Posterior vena cava (tissue), 2 donors: ENCODE measurements at regions of chr3 and their contacts with region 1.

Region 1: DNA sequence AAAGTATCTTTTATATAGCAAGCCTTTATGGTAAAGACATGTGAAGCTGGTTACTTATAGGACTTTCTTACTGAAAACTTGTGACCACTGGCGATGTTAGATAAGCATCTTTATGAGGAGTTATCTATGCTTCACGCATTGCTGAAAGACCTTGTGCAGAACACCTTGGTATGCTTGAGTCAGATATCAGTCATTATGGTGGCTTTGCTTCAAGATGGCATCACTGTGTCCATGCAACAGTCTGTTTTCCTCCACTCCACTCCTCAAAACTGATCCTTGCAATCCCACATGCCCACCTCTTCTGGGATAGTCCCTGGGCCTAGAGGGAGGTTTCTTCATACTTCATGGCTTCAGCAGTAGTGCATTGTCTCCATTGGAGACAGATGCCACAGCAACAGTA is 656.3 kb downstream of the ZNF385D start:
- DNase-seq: no peak

Region 2: GRCh38 chr3:20878691-20879090 is 216.0 kb before region 1 on chr3:
- intact Hi-C with region 1: no loop called
- DNase-seq: no peak

Region 3: GRCh38 chr3:21073561-21073960 is 21.1 kb before region 1 on chr3:
- intact Hi-C with region 1: no loop called
- DNase-seq: no peak

Region 4: DNA sequence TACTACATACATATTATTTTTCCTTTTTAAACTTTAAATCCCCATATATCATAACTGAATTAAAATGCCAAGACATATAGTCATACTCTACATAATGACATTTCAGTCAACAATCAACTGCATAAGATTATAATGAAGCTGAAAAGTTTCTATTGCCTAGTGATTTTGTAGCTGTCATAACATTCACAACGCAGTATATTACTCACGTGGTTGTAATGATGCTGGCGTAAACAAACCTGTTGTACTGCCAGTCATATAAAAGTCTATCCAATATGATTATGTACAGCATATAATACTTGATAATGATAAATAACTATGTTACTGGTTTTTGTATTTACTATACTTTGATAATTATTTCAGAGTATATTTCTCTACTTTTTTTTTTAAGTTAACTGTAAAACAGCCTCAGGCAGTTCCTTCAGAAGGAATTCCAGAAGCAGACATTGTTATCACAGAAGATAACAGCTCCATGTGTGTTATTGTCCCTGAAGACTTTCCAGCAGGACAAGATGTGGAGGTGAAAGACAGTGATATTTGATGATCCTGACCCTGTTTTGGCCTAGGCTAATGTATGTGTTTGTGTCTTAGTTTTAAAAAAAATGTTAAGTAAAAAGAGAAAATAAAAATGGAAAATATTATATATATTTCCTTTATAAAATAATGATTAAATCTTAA is 1665.1 kb after region 1 on chr3:
- intact Hi-C with region 1: loop called in 1 of 2 experiments (anchors 5 kb)
- DNase-seq: no peak